Psoas muscle (tissue), 8 donors: ENCODE measurements at regions of chr4 and their contacts with region 1.

Region 1: GRCh38 chr4:73245955-73246354 is 12.6 kb downstream of the ANKRD17 start:
- DNase-seq: no peak
- ATAC-seq: no peak
- H3K4me3 ChIP-seq: no peak overlapping the region
- H3K27ac ChIP-seq: no peak overlapping the region
- H3K4me1 ChIP-seq: peaks cover 17% of the 10 kb centered on the region
- H3K27me3 ChIP-seq: no peaks in the 10 kb centered on the region
- CTCF ChIP-seq: no peak

Region 2: GRCh38 chr4:73193155-73193554 is 52.8 kb before region 1 on chr4:
- intact Hi-C with region 1: loop called in 1 of 2 experiments (anchors 10 kb)
- DNase-seq: no peak
- ATAC-seq: no peak
- H3K4me3 ChIP-seq: no peak overlapping the region
- H3K27ac ChIP-seq: no peak overlapping the region
- H3K4me1 ChIP-seq: peaks cover 3% of the 10 kb centered on the region
- H3K27me3 ChIP-seq: no peaks in the 10 kb centered on the region
- CTCF ChIP-seq: no peak